Endothelial cell of umbilical vein (primary cell): ENCODE measurements at regions of chr13 and their contacts with region 1.

Region 1: DNA sequence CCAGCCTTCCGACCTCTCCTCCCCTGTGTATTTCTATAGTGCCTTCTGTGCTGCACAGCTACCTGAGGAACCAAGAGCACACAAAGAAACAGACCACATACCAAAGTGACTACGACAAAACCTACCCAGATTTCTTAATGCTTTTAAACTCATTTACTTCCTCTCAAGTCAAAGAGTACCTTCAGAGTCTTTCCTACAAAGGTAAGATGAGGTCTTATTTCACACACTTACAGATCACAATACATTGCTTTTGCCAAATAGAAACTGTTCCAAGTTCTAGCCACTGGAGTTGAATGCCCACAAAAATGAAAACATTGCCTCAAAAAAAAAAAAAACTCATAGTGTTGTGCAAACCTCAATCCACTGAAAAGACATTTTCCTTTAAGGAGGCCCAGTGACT is 36.4 kb downstream of the TEX26 start:
- DNase-seq: no peak
- H3K4me3 ChIP-seq: no peak overlapping the region
- H3K27ac ChIP-seq: no peak overlapping the region
- H3K4me1 ChIP-seq: no peaks in the 10 kb centered on the region
- H3K27me3 ChIP-seq: peaks cover 12 to 14% of the 10 kb centered on the region in 2 experiments
- CTCF ChIP-seq: no peak
- POLR2A ChIP-seq: no peak

Region 2: DNA sequence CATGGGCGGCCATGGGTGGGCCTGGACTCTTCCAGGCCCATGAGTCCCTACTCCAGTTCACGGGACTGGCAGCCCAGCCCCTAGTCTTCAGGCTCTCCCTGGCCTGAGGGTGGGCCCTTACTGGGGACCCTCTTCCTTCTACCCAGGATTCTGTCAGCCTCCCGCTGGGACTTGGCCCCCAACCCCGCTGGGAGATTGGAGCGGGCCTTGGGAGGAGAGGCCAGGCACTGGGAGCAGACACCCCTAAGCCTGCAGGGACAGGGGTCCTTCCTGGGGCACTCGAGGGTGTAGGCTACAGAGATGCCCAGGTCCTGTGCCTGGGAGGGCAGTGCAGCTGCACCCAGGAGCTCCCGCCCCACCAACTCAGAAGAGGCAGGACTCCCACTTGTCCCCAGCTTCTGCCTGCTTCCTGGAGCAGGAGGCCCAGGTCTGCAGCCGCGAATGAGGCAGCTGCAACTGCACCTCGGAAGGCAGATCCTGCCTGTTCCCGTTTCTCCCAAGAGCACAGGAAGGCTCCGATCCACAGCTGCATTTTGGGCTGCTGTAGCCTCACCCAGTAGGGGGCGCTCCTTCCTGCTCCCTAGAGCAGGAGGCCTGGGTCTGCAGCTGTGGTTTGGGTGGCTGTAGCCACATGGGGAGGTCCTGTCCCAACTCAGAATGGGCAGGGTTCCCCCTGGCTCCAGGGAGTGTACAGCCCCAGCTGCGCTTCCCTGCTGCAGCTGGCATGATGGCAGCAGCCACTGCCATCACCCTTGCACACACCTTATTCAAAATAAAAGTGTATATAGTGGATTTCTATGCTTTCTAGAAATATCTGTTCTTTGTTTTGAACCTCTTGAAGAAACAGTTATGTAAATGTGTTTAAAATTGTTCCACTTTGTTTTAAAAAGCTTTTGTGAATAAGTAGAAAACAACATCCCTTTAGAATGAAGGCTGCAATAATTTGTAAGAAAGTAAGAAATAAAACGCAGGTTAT is 10.4 kb after region 1 on chr13:
- CTCF ChIA-PET with region 1: interaction called, 17 read pairs
- POLR2A ChIA-PET with region 1: no interaction called
- dilution Hi-C with region 1: no loop called
- intact Hi-C with region 1: no loop called
- DNase-seq: peak; percentile 5
- H3K4me3 ChIP-seq: no peak overlapping the region
- H3K27ac ChIP-seq: no peak overlapping the region
- H3K4me1 ChIP-seq: peaks cover 3% of the 10 kb centered on the region
- H3K27me3 ChIP-seq: peaks cover 0 to 3% of the 10 kb centered on the region in 2 experiments
- CTCF ChIP-seq: peak; percentile 50 to 77
- POLR2A ChIP-seq: no peak